Activated naive CD4-positive, alpha-beta T cell treated with anti-CD3 and anti-CD28 coated beads for 36 hours (primary cell): ENCODE measurements at regions of chr12 and their contacts with region 1.

Region 1: GRCh38 chr12:32106517-32107358 is at the start of gene BICD1:
- DNase-seq: peak; percentile 85
- H3K4me3 Mint-ChIP-seq: peak within 1 kb of the TSS; percentile 90
- H3K27ac Mint-ChIP-seq: peak within 1 kb of the TSS; percentile 84
- H3K4me1 Mint-ChIP-seq: peaks cover 18% of the 10 kb centered on the region
- H3K27me3 Mint-ChIP-seq: no peaks in the 10 kb centered on the region
- total RNA-seq, gene BICD1: 14.4 to 16.4 TPM

Region 2: GRCh38 chr12:30754709-30755394 is 1351.9 kb before region 1 on chr12 and contains the start of gene CAPRIN2:
- CTCF ChIA-PET with region 1: no interaction called
- intact Hi-C with region 1: loop called (anchors 10 kb)
- DNase-seq: peak; percentile 95
- H3K4me3 Mint-ChIP-seq: peak within 1 kb of the TSS; percentile 94
- H3K27ac Mint-ChIP-seq: peak within 1 kb of the TSS; percentile 51
- H3K4me1 Mint-ChIP-seq: peaks cover 38% of the 10 kb centered on the region
- H3K27me3 Mint-ChIP-seq: no peaks in the 10 kb centered on the region
- total RNA-seq, gene CAPRIN2: 10.3 to 11.3 TPM

Region 3: GRCh38 chr12:31682136-31682962 is 424.4 kb before region 1 on chr12:
- CTCF ChIA-PET with region 1: interaction called, 4 read pairs
- intact Hi-C with region 1: loop called (anchors 2 kb)
- DNase-seq: peak; percentile 83
- H3K4me3 Mint-ChIP-seq: no peak overlapping the region
- H3K27ac Mint-ChIP-seq: peak overlapping the region; percentile 84
- H3K4me1 Mint-ChIP-seq: peaks cover 5% of the 10 kb centered on the region
- H3K27me3 Mint-ChIP-seq: no peaks in the 10 kb centered on the region

Region 4: GRCh38 chr12:31783996-31784645 is 322.6 kb before region 1 on chr12:
- CTCF ChIA-PET with region 1: no interaction called
- intact Hi-C with region 1: no loop called
- DNase-seq: no peak
- H3K4me3 Mint-ChIP-seq: no peak overlapping the region
- H3K27ac Mint-ChIP-seq: no peak overlapping the region
- H3K4me1 Mint-ChIP-seq: peaks cover 8% of the 10 kb centered on the region
- H3K27me3 Mint-ChIP-seq: no peaks in the 10 kb centered on the region

Region 5: GRCh38 chr12:31896514-31897039 is 210.2 kb before region 1 on chr12:
- CTCF ChIA-PET with region 1: interaction called, 3 read pairs
- intact Hi-C with region 1: loop called (anchors 1 kb)
- DNase-seq: peak; percentile 96
- H3K4me3 Mint-ChIP-seq: peak overlapping the region; percentile 55
- H3K27ac Mint-ChIP-seq: peak overlapping the region; percentile 99
- H3K4me1 Mint-ChIP-seq: peaks cover 58% of the 10 kb centered on the region
- H3K27me3 Mint-ChIP-seq: no peaks in the 10 kb centered on the region

Region 6: DNA sequence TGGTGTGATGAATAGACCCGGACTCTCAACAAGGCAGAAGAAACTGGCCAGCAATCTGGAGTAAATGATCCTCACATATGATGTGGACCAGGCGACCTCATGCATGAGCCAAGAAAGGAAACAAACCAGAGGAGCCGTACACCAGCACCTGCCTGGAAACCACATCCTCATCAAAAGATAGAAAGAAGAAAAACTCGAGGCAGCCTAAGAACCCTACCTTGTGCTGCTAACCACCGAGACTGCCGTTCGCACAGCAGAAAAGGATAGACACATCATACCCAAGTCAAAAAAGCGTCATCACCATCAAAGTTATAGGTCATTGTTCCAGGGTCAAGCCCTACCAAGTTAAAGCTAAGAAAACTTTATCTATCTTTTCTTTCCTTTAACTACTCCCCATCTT is 80.8 kb before region 1 on chr12:
- CTCF ChIA-PET with region 1: interaction called, 5 read pairs
- intact Hi-C with region 1: loop called (anchors 1 kb)
- DNase-seq: peak; percentile 84
- H3K4me3 Mint-ChIP-seq: no peak overlapping the region
- H3K27ac Mint-ChIP-seq: peak overlapping the region; percentile 81
- H3K4me1 Mint-ChIP-seq: peaks cover 24% of the 10 kb centered on the region
- H3K27me3 Mint-ChIP-seq: no peaks in the 10 kb centered on the region

Region 7: DNA sequence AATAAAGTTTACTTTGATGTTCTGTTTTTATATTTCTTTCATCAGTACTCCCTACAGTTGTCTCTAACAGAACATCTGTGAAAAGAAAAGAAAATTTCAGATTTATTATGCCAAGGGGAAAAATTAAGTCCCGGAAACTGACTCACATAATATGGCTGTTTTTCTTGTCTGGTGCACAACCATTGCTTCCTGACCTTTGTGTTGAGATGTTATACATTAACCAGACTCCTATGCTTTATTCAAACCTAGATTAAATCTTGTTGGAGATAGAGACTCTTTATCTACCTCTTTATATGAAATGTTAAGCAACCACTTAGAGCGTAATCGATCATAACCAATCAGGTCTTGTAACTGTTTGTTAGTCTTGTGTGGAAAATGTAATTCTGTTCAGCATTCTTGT is 37.7 kb before region 1 on chr12:
- CTCF ChIA-PET with region 1: no interaction called
- intact Hi-C with region 1: no loop called
- DNase-seq: no peak
- H3K4me3 Mint-ChIP-seq: no peak overlapping the region
- H3K27ac Mint-ChIP-seq: no peak overlapping the region
- H3K4me1 Mint-ChIP-seq: no peaks in the 10 kb centered on the region
- H3K27me3 Mint-ChIP-seq: no peaks in the 10 kb centered on the region

Region 8: DNA sequence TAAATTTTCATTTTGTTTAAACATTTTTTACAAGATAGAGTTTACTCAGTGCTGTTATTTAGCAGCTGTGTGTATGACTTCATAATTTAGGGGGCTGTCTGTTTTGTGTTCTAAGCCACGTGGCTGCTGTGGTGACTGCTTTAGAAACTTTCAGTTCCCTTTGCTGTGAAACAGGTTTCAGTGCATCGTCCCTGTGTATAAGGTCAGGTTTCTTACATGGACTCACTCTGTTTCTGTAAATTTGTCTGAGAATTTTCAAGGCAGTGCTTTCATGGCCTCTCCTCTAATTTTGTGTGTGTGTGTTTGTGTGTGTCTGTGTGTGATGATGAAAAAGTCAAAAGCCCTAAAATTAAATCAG is 32.3 kb after region 1 on chr12:
- CTCF ChIA-PET with region 1: interaction called, 7 read pairs
- intact Hi-C with region 1: loop called (anchors 1 kb)
- DNase-seq: peak; percentile 74
- H3K4me3 Mint-ChIP-seq: peak overlapping the region; percentile 71
- H3K27ac Mint-ChIP-seq: no peak overlapping the region
- H3K4me1 Mint-ChIP-seq: peaks cover 24% of the 10 kb centered on the region
- H3K27me3 Mint-ChIP-seq: peaks cover 2% of the 10 kb centered on the region

Region 9: DNA sequence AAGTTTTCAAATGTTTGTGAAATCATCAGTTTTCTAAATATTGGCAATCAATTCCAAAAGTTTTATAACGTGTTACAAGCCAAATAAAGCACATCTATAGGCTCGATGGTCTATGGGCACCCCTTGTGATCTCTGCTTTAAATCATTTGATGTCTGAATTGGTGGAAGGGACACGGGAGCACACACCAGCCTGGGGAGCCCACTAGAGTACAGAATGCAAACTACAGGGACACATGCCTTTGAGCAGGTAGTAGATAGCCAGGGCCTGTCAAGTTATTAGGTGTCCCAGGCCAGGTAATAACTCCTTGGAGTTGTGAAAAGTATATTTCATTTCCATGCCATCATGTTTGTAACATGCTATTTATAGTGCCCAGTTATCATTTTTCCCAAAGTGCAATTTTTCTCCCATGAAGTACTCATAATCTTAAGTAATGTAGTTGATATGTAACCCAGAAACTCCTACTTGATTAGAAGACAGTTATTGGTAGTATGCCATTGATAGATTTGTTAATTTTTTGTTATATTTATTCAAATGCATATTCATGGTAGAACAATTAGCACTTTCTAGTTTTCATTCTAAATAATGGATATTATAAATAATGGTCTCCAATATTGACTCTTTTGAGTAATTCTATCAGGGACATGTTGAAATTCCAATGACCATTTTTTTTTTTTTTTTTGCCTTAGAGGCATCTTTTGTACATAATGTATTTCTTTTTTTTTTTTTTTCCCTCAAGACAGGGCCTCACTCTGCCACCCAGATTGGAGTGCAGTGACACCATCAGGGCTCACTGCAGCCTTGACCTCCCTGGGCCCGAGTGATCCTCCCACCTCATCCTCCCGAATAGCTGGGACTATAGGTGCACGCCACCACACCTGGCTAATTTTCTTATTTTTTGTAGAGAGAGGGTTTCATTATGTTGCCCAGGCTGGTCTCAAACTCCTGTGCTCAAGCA is 195.8 kb after region 1 on chr12:
- CTCF ChIA-PET with region 1: no interaction called
- intact Hi-C with region 1: loop called (anchors 2 kb)
- DNase-seq: no peak
- H3K4me3 Mint-ChIP-seq: no peak overlapping the region
- H3K27ac Mint-ChIP-seq: no peak overlapping the region
- H3K4me1 Mint-ChIP-seq: no peaks in the 10 kb centered on the region
- H3K27me3 Mint-ChIP-seq: no peaks in the 10 kb centered on the region

Region 10: GRCh38 chr12:32365473-32366064 is 258.8 kb after region 1 on chr12:
- CTCF ChIA-PET with region 1: no interaction called
- intact Hi-C with region 1: no loop called
- DNase-seq: peak; percentile 69
- H3K4me3 Mint-ChIP-seq: no peak overlapping the region
- H3K27ac Mint-ChIP-seq: no peak overlapping the region
- H3K4me1 Mint-ChIP-seq: no peaks in the 10 kb centered on the region
- H3K27me3 Mint-ChIP-seq: no peaks in the 10 kb centered on the region

Region 11: DNA sequence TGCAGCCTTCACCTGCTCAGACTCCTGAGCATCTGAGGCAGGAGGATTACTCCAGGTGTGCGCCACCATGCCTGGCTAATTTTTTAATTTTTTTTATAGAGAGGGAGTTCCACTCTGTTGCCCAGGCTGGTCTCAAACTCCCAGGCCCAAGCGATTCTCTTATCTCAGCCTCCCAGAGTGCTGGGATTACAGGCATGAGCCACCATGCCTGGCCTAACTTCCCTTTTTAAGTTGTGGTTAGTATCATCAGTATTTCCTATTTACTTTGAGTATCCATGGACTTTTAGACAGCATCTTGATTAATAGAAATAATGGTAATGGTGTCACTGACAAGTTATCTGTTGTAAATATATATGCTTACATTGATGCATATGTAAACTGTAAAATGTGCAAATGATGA is 409.5 kb after region 1 on chr12:
- CTCF ChIA-PET with region 1: no interaction called
- intact Hi-C with region 1: no loop called
- DNase-seq: no peak
- H3K4me3 Mint-ChIP-seq: no peak overlapping the region
- H3K27ac Mint-ChIP-seq: no peak overlapping the region
- H3K4me1 Mint-ChIP-seq: no peaks in the 10 kb centered on the region
- H3K27me3 Mint-ChIP-seq: peaks cover 9% of the 10 kb centered on the region